ENCODE measurements at regions of chr16 and their contacts with region 1.

Region 1: DNA sequence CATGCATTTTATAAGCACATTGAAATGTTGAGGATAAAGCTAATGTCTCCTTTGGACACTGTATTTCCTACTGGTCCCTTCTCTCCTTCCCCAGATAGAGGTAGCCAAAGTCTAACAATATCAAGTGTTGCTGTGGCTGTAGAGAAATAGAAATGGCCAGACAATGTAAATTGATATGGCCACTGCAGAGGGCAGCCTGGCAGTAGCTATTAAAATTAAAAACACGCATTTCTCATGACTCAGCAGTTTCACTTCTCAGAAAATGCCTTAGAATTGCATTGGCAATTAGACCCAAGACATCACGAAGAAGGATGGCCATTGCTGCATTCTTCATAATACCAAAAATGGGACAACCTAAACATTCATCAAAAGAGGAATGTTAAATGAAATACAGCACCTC is 46.8 kb upstream of the MRTFB start:
- DNase-seq: no peak
- ATAC-seq: peak; percentile 67 to 83
- H3K4me3 ChIP-seq: no peak overlapping the region
- H3K27ac ChIP-seq: peak overlapping the region in 3 of 4 donors; percentile 58 to 74 (median 65)
- H3K4me1 ChIP-seq: peaks cover 29 to 38% of the 10 kb centered on the region in 2 donors
- H3K27me3 ChIP-seq: no peaks in the 10 kb centered on the region
- CTCF ChIP-seq: no peak
- POLR2A ChIP-seq: no peak

Region 2: DNA sequence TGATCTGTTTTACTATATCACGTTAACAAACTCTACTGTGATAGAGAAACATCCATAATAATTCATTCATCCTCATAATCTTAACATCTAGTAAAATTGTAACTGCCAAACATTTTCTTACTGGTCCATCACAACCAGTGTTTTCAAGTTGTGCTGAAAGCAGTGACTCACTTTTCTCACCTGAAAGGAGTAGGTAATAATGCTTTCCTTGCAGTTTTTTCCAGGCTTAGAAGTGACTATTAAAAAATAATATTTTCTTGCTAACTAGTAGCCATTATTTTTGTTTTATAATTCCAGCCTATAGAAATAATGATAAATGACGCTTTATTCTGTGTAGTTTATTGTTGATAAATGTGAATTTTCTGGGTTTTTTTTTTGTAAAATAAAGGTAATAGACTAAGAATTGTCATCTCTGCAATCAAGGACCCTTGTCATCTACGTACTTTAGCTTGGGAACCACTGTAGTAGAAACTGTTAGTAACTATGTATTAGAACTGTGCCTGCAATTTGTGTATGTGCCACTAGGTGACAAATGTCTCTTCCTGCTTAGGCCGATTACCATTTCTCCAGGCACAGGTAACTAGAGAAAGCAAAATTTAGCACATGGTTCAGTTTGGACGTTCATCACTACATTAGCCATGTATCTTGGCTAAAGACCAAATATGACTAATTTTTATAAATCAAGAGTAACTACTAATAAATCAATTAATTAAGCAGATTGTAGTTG is 513.7 kb before region 1 on chr16:
- in situ Hi-C with region 1: no loop called
- intact Hi-C with region 1: no loop called
- DNase-seq: no peak
- ATAC-seq: no peak
- H3K4me3 ChIP-seq: no peak overlapping the region
- H3K27ac ChIP-seq: no peak overlapping the region
- H3K4me1 ChIP-seq: no peaks in the 10 kb centered on the region
- H3K27me3 ChIP-seq: no peaks in the 10 kb centered on the region
- CTCF ChIP-seq: peak in 1 of 5 experiments; percentile 14
- POLR2A ChIP-seq: no peak

Region 3: GRCh38 chr16:14070877-14071575 is 46.7 kb after region 1 on chr16 and contains the start of gene MRTFB:
- in situ Hi-C with region 1: no loop called
- intact Hi-C with region 1: loop called (anchors 10 kb)
- DNase-seq: peak; percentile 41 to 63
- ATAC-seq: peak; percentile 90 to 94
- H3K4me3 ChIP-seq: peak within 1 kb of the TSS; percentile 75 to 96 (median 89)
- H3K27ac ChIP-seq: peak within 1 kb of the TSS; percentile 76 to 91 (median 86)
- H3K4me1 ChIP-seq: peaks cover 10 to 20% of the 10 kb centered on the region in 2 donors
- H3K27me3 ChIP-seq: no peaks in the 10 kb centered on the region
- CTCF ChIP-seq: no peak
- POLR2A ChIP-seq: peak; percentile 67 to 80
- total RNA-seq, gene MRTFB: 12.7 to 20.4 (median 14.8) TPM

Region 4: GRCh38 chr16:14088155-14088753 is 64.0 kb after region 1 on chr16:
- in situ Hi-C with region 1: no loop called
- intact Hi-C with region 1: no loop called
- DNase-seq: no peak
- ATAC-seq: peak in 1 of 2 donors; percentile 30
- H3K4me3 ChIP-seq: no peak overlapping the region
- H3K27ac ChIP-seq: peak overlapping the region; percentile 1 to 62 (median 28)
- H3K4me1 ChIP-seq: peaks cover 48 to 71% of the 10 kb centered on the region in 2 donors
- H3K27me3 ChIP-seq: no peaks in the 10 kb centered on the region
- CTCF ChIP-seq: no peak
- POLR2A ChIP-seq: no peak

Region 5: GRCh38 chr16:14151256-14152030 is 127.1 kb after region 1 on chr16:
- in situ Hi-C with region 1: no loop called
- intact Hi-C with region 1: no loop called
- DNase-seq: peak in 1 of 2 donors; percentile 19
- ATAC-seq: peak; percentile 61 to 67
- H3K4me3 ChIP-seq: no peak overlapping the region
- H3K27ac ChIP-seq: peak overlapping the region; percentile 1 to 25 (median 22)
- H3K4me1 ChIP-seq: peaks cover 0 to 30% of the 10 kb centered on the region in 2 donors
- H3K27me3 ChIP-seq: no peaks in the 10 kb centered on the region
- CTCF ChIP-seq: no peak
- POLR2A ChIP-seq: no peak

Measured in gastrocnemius medialis (tissue), 4 donors.